ENCODE measurements at regions of chr16 and their contacts with region 1.

Region 1: GRCh38 chr16:4976079-4976478 is 17.9 kb downstream of the SEC14L5 start:
- H3K4me3 Mint-ChIP-seq: no peak overlapping the region
- H3K27ac Mint-ChIP-seq: peak overlapping the region; percentile 42
- H3K4me1 Mint-ChIP-seq: peaks cover 28% of the 10 kb centered on the region
- H3K27me3 Mint-ChIP-seq: peaks cover 33% of the 10 kb centered on the region

Region 2: GRCh38 chr16:4924593-4925378 is 51.3 kb before region 1 on chr16:
- intact Hi-C with region 1: no loop called
- H3K4me3 Mint-ChIP-seq: no peak overlapping the region
- H3K27ac Mint-ChIP-seq: no peak overlapping the region
- H3K4me1 Mint-ChIP-seq: no peaks in the 10 kb centered on the region
- H3K27me3 Mint-ChIP-seq: peaks cover 22% of the 10 kb centered on the region

Region 3: DNA sequence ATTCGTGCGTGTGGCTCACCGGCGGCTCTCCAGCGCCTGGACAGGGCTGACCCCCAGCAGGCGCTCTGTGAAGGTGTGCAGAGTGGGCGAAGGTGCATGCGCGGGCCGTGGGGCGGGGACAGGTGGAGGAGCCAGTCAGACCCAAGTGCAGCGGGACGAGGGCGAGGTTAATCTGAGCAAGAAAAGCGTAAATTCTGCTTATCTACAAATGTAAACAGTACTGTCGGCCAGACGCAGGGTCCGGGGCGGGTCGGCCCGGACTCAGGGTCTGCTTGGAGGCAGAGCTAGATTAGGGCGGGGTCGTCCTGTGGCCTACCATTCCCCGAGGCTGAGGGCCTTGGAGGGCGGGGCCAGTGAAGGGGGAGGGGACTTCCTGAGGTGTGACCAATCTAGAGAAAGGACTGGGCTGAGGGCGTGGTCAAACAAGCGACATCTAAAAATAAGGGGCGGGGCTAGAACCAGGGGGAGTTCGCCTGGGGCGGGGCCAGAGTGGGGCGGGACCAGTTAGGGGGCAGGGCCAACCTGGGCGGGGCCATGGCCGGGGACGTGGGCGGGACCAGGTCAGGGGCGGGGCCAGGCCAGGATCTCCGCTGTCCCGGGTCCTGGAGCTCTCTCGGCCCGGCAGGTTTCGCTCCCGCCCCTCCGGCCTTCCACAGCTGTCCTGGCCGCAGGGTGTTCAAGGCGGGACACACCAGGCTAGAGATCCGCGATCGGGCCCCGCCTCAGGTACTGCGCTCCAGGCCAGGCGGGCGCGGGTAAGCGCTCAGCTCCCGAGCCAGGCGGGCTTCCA is 18.2 kb before region 1 on chr16 and contains the start of gene SEC14L5:
- intact Hi-C with region 1: loop called (anchors 2 kb)
- H3K4me3 Mint-ChIP-seq: peak within 1 kb of the TSS; percentile 87
- H3K27ac Mint-ChIP-seq: peak within 1 kb of the TSS; percentile 77
- H3K4me1 Mint-ChIP-seq: peaks cover 27% of the 10 kb centered on the region
- H3K27me3 Mint-ChIP-seq: peaks cover 64% of the 10 kb centered on the region